ENCODE measurements at regions of chr1 and their contacts with region 1.

Region 1: DNA sequence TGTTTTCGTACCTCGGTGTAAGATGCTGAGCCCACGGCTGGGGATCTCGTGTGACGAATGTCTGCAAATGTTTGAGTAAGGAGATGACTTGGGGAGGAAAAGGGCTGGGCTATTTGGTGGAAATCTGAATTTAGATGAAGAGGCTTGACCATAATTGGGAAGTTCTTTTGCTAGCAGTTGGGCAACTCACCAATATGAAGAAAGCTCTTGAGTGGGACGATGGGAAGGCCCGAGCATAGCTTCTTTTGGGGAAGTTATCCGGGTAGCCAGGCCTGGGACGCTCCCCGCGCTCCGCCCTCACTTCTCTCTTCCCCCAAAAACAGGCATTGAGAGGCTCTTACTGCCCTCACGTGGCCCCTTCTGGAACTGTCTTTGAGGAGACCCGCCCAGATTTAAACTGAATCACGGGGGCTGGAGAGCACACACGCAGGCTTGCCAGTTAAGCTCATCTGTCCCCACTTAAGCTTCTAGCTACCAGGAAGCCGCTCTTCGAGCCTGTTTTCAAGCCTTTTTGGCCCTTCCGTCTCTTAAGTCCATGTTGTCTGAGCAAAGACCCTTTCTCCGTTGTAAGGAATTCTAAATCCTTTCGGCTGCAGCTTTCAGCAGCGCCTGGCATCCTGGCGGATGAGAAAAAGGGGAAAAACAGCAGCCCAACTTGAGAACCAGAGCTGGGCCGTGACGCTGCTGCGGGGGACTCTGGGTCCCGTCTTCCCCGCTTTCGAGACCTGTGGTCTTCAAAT is 93.1 kb downstream of the NID1 start:
- DNase-seq: peak; percentile 84
- H3K27ac ChIP-seq: peak overlapping the region; percentile 71
- CTCF ChIP-seq: peak; percentile 85

Region 2: GRCh38 chr1:235866913-235867845 is 104.6 kb before region 1 on chr1:
- CTCF ChIA-PET with region 1: interaction called, 35 read pairs
- POLR2A ChIA-PET with region 1: no interaction called
- DNase-seq: peak; percentile 96
- H3K27ac ChIP-seq: peak overlapping the region; percentile 90
- CTCF ChIP-seq: no peak

Region 3: GRCh38 chr1:235907187-235907896 is 64.4 kb before region 1 on chr1:
- CTCF ChIA-PET with region 1: interaction called, 11 read pairs
- POLR2A ChIA-PET with region 1: no interaction called
- DNase-seq: no peak
- H3K27ac ChIP-seq: peak overlapping the region; percentile 97
- CTCF ChIP-seq: no peak

Measured in RWPE1 (cell line).